Naive thymus-derived CD4-positive, alpha-beta T cell (primary cell): ENCODE measurements at regions of chr7 and their contacts with region 1.

Region 1: GRCh38 chr7:111029574-111030251 is 61.2 kb upstream of the LRRN3 start:
- DNase-seq: peak in 7 of 9 donors; percentile 34 to 68 (median 57)
- ATAC-seq: no peak
- H3K4me3 ChIP-seq: no peak overlapping the region
- H3K4me3 Mint-ChIP-seq: peak overlapping the region in 9 of 10 donors; percentile 42 to 81 (median 63)
- H3K27ac ChIP-seq: peak overlapping the region; percentile 33
- H3K27ac Mint-ChIP-seq: peak overlapping the region; percentile 77 to 98 (median 89)
- H3K4me1 ChIP-seq: peaks cover 15 to 47% of the 10 kb centered on the region in 2 donors
- H3K4me1 Mint-ChIP-seq: peaks cover 31 to 69% (median 63%) of the 10 kb centered on the region in 7 donors
- H3K27me3 ChIP-seq: no peaks in the 10 kb centered on the region
- H3K27me3 Mint-ChIP-seq: peaks cover 0 to 2% (median 0%) of the 10 kb centered on the region in 5 donors

Region 2: DNA sequence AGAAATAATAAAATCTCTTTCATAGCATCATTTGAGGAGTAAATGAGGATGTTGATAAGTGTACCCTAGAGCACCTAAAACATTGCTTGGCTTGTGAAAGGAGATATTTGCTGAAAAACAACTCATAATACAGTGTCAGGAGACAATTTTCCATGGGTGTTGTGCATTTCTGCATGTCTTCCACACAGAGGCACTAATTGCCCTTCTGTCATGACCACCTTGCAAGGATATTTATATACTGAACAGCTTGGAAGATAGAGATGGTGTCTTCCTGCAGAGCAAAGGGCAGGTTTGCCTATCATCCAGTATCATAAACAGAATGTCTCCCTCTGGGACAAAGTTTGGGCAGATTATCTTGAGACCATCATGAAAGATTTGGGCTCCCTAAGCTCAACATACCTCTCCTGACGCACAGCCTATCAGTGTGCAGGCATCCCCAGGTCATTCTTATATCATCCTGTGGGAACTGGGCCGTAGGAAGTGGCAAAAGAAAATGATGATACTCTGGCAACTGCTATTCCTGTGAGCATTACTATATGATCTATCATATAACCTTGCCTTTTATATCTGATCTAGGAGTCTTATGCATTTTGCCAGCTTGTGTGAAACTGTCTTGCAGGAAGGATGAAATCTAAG is 433.9 kb before region 1 on chr7:
- CTCF ChIA-PET with region 1: no interaction called
- POLR2A ChIA-PET with region 1: interaction called, 3 read pairs
- intact Hi-C with region 1: loop called in 1 of 2 experiments (anchors 5 kb)
- DNase-seq: peak in 5 of 9 donors; percentile 16 to 39 (median 21)
- ATAC-seq: no peak
- H3K4me3 ChIP-seq: no peak overlapping the region
- H3K4me3 Mint-ChIP-seq: no peak overlapping the region
- H3K27ac ChIP-seq: no peak overlapping the region
- H3K27ac Mint-ChIP-seq: no peak overlapping the region
- H3K4me1 ChIP-seq: no peaks in the 10 kb centered on the region
- H3K4me1 Mint-ChIP-seq: peaks cover 0 to 15% (median 0%) of the 10 kb centered on the region in 7 donors
- H3K27me3 ChIP-seq: no peaks in the 10 kb centered on the region
- H3K27me3 Mint-ChIP-seq: peaks cover 0 to 11% (median 0%) of the 10 kb centered on the region in 5 donors

Region 3: DNA sequence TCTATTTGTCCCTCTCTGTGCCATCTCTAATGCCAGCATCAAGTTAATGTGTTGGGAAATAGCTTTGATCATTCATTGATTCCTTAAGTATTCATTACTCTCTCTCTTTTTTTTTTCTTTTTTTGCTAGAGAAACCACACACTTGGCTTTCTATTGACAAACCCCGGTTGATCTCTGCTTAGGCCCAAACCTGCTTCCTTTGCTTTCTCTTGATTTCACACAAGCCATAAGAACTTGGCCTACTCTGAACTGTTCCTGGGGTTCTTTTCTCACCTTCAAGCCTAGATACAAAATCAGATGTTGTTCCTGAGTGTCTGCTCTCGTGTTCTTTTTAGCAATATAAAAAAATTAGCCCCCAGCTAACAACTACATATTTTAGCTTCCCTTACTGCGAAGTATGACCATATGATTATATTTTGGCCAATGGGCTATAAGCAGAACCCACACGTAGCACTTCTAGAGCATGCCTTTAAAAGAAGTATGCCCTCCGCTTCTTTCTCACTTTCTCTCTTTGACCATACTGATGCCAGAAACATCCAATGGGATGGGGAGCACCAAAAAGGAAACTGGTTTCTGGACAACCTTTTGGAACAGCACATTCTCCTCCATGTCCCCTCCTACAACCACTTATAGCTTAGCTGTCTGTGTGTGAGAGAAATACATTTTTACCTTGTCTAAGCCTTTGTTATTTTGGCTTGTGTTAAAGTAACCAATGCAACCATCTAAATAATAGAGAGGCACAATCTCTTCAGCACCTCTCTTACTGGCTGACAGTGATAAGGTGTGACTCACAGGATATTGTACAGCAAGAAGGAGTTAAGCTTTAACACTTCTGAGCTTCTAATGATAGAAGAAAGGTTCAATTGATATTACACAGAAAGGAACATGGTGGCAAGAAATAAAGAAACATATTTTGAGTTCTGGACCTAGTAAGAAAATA is 35.4 kb before region 1 on chr7:
- CTCF ChIA-PET with region 1: no interaction called
- POLR2A ChIA-PET with region 1: interaction called, 4 read pairs
- intact Hi-C with region 1: loop called (anchors 2 to 5 kb)
- DNase-seq: peak in 1 of 9 donors; percentile 37
- ATAC-seq: peak; percentile 64
- H3K4me3 ChIP-seq: no peak overlapping the region
- H3K4me3 Mint-ChIP-seq: peak overlapping the region; percentile 8 to 65 (median 54)
- H3K27ac ChIP-seq: peak overlapping the region; percentile 50
- H3K27ac Mint-ChIP-seq: peak overlapping the region; percentile 83 to 93 (median 91)
- H3K4me1 ChIP-seq: peaks cover 0 to 25% of the 10 kb centered on the region in 2 donors
- H3K4me1 Mint-ChIP-seq: peaks cover 18 to 43% (median 40%) of the 10 kb centered on the region in 7 donors
- H3K27me3 ChIP-seq: no peaks in the 10 kb centered on the region
- H3K27me3 Mint-ChIP-seq: no peaks in the 10 kb centered on the region

Region 4: GRCh38 chr7:111018960-111019736 is 10.6 kb before region 1 on chr7:
- CTCF ChIA-PET with region 1: interaction called, 7 read pairs
- POLR2A ChIA-PET with region 1: interaction called, 42 read pairs
- intact Hi-C with region 1: loop called in 1 of 2 experiments (anchors 1 kb)
- DNase-seq: no peak
- ATAC-seq: peak; percentile 48
- H3K4me3 ChIP-seq: peak overlapping the region; percentile 36
- H3K4me3 Mint-ChIP-seq: peak overlapping the region; percentile 52 to 82 (median 72)
- H3K27ac ChIP-seq: peak overlapping the region; percentile 54
- H3K27ac Mint-ChIP-seq: peak overlapping the region; percentile 53 to 98 (median 84)
- H3K4me1 ChIP-seq: peaks cover under 1 to 68% of the 10 kb centered on the region in 2 donors
- H3K4me1 Mint-ChIP-seq: peaks cover 32 to 91% (median 87%) of the 10 kb centered on the region in 7 donors
- H3K27me3 ChIP-seq: no peaks in the 10 kb centered on the region
- H3K27me3 Mint-ChIP-seq: no peaks in the 10 kb centered on the region

Region 5: GRCh38 chr7:111059833-111060232 is 30.1 kb after region 1 on chr7:
- CTCF ChIA-PET with region 1: interaction called, 5 read pairs
- POLR2A ChIA-PET with region 1: no interaction called
- intact Hi-C with region 1: loop called in 1 of 2 experiments (anchors 2 kb)
- DNase-seq: no peak
- ATAC-seq: no peak
- H3K4me3 ChIP-seq: no peak overlapping the region
- H3K4me3 Mint-ChIP-seq: no peak overlapping the region
- H3K27ac ChIP-seq: no peak overlapping the region
- H3K27ac Mint-ChIP-seq: no peak overlapping the region
- H3K4me1 ChIP-seq: no peaks in the 10 kb centered on the region
- H3K4me1 Mint-ChIP-seq: peaks cover 4 to 45% (median 26%) of the 10 kb centered on the region in 7 donors
- H3K27me3 ChIP-seq: no peaks in the 10 kb centered on the region
- H3K27me3 Mint-ChIP-seq: no peaks in the 10 kb centered on the region

Region 6: DNA sequence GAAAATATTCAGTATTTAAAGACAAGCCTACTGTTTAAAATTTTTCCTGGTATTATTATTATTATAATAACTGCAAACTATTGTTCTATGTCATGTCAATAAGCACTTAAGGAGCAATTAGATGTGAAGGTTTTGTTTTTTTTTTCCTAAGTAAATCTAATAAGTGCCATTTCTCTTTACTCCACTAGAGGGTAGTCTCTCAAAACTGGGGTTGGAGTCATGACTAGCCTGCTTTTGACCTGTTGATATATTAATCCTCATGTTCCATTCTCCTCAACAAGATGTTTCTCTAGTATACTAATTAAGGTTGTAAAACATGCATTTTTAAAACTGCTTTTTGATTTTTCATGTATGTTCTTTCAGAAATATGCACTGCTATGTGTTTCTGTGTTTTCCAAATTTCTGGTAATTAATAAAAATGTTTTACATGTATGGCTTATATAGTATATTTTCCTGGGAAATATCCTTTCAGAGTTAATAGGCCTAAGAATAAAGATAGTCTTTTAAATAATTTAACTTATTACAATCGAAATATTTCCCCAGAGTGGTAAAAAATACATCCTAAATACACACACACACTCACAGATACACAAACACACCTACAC is 60.2 kb after region 1 on chr7:
- CTCF ChIA-PET with region 1: no interaction called
- POLR2A ChIA-PET with region 1: interaction called, 19 read pairs
- intact Hi-C with region 1: loop called in 1 of 2 experiments (anchors 2 kb)
- DNase-seq: peak in 4 of 9 donors; percentile 43 to 50 (median 47)
- ATAC-seq: peak; percentile 70
- H3K4me3 ChIP-seq: peak overlapping the region; percentile 58
- H3K4me3 Mint-ChIP-seq: peak overlapping the region; percentile 84 to 99 (median 98)
- H3K27ac ChIP-seq: no peak overlapping the region
- H3K27ac Mint-ChIP-seq: peak overlapping the region in 5 of 9 donors; percentile 25 to 97 (median 93)
- H3K4me1 ChIP-seq: peaks cover under 1 to 13% of the 10 kb centered on the region in 2 donors
- H3K4me1 Mint-ChIP-seq: peaks cover 6 to 77% (median 60%) of the 10 kb centered on the region in 7 donors
- H3K27me3 ChIP-seq: no peaks in the 10 kb centered on the region
- H3K27me3 Mint-ChIP-seq: no peaks in the 10 kb centered on the region

Region 7: DNA sequence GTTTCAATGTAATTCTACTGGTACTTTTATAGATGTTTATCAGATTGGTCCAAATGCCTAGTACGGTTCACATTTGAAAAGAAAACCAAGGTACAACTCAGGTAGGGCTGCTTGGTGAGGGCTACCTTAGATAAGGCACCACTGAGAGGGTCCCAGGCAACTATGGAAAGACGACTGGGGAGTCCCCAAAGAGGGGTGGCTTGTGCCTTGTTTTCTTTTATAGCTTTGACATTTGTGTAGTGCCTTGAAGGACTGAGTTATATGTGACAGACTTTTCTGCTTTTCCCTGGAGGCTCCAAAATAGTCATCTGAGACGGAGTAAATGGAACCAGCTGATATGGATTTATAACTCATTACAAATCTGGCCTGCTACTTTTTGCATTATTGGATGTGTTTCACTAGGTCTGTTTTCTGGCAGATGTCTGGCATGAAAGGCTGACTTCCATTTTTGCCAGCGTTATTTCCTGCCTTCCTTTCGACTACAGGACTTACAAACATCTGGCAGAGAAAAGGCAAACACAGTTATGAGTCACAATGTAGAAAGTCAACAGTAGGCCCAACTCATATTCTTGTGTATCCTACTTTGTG is 620.8 kb after region 1 on chr7:
- CTCF ChIA-PET with region 1: no interaction called
- POLR2A ChIA-PET with region 1: no interaction called
- intact Hi-C with region 1: no loop called
- DNase-seq: no peak
- ATAC-seq: no peak
- H3K4me3 ChIP-seq: no peak overlapping the region
- H3K4me3 Mint-ChIP-seq: no peak overlapping the region
- H3K27ac ChIP-seq: no peak overlapping the region
- H3K27ac Mint-ChIP-seq: no peak overlapping the region
- H3K4me1 ChIP-seq: no peaks in the 10 kb centered on the region
- H3K4me1 Mint-ChIP-seq: no peaks in the 10 kb centered on the region
- H3K27me3 ChIP-seq: no peaks in the 10 kb centered on the region
- H3K27me3 Mint-ChIP-seq: peaks cover 0 to 18% (median 9%) of the 10 kb centered on the region in 5 donors